Activated B cell treated with CpG ODN at 0.5 μM for 24 hours (primary cell): ENCODE measurements at regions of chr2 and their contacts with region 1.

Region 1: GRCh38 chr2:85327822-85328617 is at the start of gene TGOLN2:
- DNase-seq: peak; percentile 91
- ATAC-seq: peak; percentile 90
- H3K4me3 Mint-ChIP-seq: peak within 1 kb of the TSS; percentile 99
- H3K27ac Mint-ChIP-seq: peak within 1 kb of the TSS; percentile 100
- H3K4me1 Mint-ChIP-seq: peaks cover 61% of the 10 kb centered on the region
- H3K27me3 Mint-ChIP-seq: no peaks in the 10 kb centered on the region
- CTCF ChIP-seq: no peak
- total RNA-seq, gene TGOLN2: 103 and 119 TPM in 2 replicates

Region 2: GRCh38 chr2:84946204-84947009 is 381.6 kb before region 1 on chr2:
- CTCF ChIA-PET with region 1: no interaction called
- POLR2A ChIA-PET with region 1: interaction called, 16 read pairs
- intact Hi-C with region 1: no loop called
- DNase-seq: peak; percentile 44
- ATAC-seq: peak; percentile 77
- H3K4me3 Mint-ChIP-seq: peak overlapping the region; percentile 72
- H3K27ac Mint-ChIP-seq: peak overlapping the region; percentile 97
- H3K4me1 Mint-ChIP-seq: peaks cover 54% of the 10 kb centered on the region
- H3K27me3 Mint-ChIP-seq: no peaks in the 10 kb centered on the region
- CTCF ChIP-seq: no peak

Region 3: DNA sequence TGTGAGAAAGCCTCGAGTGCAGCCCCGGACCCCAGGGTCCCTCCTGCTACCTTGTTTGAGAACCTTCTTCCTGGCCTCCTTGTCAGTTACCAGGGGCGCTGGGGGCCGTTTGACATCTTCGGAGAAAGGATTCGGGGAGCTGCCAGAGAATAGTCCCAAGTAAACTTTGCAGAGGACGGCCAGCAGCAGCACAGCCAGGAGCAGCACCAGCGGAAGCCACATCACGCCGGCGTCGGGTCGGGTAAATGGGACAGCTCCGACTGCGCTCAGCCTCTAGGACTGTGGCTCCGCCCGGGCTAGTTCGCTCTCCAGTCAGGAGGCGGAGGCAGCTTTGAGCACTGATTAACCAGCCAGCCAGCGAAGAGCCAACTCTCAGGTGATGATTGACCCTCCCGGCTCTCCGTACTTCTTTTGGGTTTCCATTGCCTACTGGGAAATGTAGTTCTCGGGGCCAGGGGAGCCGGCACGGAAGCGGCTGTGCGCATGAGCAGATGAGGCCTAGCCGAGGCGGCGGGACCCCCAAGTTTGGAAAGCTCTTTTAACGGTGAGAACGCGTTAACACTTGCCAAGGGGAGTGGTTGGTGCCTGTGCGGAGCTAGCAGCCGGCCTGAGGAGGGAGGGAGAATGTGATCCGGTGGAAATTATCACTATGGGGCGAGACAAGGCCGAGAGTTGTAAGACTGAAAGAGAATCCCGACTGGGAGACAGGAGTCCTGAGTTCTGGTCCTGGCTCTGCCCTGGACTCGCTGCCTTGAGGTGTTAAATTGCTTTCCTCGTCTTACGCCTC is 26.5 kb after region 1 on chr2 and contains the starts of genes ELMOD3 and RETSAT:
- CTCF ChIA-PET with region 1: no interaction called
- POLR2A ChIA-PET with region 1: interaction called, 93 read pairs
- intact Hi-C with region 1: loop called (anchors 1 kb)
- DNase-seq: peak; percentile 84
- ATAC-seq: peak; percentile 99
- H3K4me3 Mint-ChIP-seq: peak within 1 kb of the TSS; percentile 100
- H3K27ac Mint-ChIP-seq: peak within 1 kb of the TSS; percentile 99
- H3K4me1 Mint-ChIP-seq: peaks cover 48% of the 10 kb centered on the region
- H3K27me3 Mint-ChIP-seq: no peaks in the 10 kb centered on the region
- CTCF ChIP-seq: no peak
- total RNA-seq, gene ELMOD3: 19.2 and 25.4 TPM in 2 replicates
- total RNA-seq, gene RETSAT: 16.9 and 17.1 TPM in 2 replicates

Region 4: DNA sequence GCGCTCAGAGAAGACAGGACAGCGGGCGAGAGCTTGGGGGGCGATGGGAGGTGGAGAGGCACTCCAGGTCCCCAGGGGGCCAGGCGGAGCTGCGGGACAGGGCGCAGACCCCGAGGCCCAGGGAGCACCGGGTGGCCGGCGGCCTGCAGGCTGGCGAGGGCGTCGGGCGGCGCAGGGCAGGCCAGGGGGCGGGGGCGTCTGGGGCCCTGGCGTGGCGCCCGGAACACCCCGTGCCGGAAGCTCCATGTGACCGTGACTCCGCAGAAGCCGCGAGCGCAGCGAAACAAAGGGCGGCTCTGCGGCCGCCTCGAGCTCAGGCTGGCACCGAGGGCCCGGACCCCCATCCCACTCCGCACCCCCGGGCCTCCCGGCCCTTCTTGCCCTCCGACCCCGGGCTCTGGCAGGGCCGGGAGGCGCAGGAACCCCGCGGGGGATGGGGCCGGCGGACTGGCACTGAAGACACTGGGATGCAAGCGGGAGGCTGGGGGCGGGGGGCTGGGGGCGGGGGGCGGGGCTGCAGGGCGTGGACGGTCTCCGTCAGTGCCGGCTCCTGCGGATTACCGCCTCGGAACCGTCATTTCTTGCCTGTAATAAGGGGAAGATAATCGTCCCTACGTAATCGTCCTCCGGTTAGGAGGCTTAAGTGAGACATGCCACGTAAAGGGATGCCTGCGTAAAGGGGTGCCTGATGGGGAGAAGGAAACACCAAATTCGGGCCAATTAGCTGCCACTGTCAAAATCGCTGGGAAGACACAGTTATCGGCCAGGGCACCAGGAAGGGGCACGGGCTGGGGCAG is 109.7 kb after region 1 on chr2:
- CTCF ChIA-PET with region 1: no interaction called
- POLR2A ChIA-PET with region 1: interaction called, 25 read pairs
- intact Hi-C with region 1: no loop called
- DNase-seq: peak; percentile 80
- ATAC-seq: peak; percentile 86
- H3K4me3 Mint-ChIP-seq: peak overlapping the region; percentile 87
- H3K27ac Mint-ChIP-seq: peak overlapping the region; percentile 95
- H3K4me1 Mint-ChIP-seq: peaks cover 33% of the 10 kb centered on the region
- H3K27me3 Mint-ChIP-seq: no peaks in the 10 kb centered on the region
- CTCF ChIP-seq: no peak

Region 5: GRCh38 chr2:85602476-85603234 is 274.6 kb after region 1 on chr2 and contains the start of gene TMEM150A:
- CTCF ChIA-PET with region 1: no interaction called
- POLR2A ChIA-PET with region 1: interaction called, 10 read pairs
- intact Hi-C with region 1: no loop called
- DNase-seq: peak; percentile 91
- ATAC-seq: peak; percentile 97
- H3K4me3 Mint-ChIP-seq: peak within 1 kb of the TSS; percentile 90
- H3K27ac Mint-ChIP-seq: peak within 1 kb of the TSS; percentile 84
- H3K4me1 Mint-ChIP-seq: peaks cover 31% of the 10 kb centered on the region
- H3K27me3 Mint-ChIP-seq: no peaks in the 10 kb centered on the region
- CTCF ChIP-seq: no peak
- total RNA-seq, gene TMEM150A: 13.2 and 15.0 TPM in 2 replicates

Region 6: DNA sequence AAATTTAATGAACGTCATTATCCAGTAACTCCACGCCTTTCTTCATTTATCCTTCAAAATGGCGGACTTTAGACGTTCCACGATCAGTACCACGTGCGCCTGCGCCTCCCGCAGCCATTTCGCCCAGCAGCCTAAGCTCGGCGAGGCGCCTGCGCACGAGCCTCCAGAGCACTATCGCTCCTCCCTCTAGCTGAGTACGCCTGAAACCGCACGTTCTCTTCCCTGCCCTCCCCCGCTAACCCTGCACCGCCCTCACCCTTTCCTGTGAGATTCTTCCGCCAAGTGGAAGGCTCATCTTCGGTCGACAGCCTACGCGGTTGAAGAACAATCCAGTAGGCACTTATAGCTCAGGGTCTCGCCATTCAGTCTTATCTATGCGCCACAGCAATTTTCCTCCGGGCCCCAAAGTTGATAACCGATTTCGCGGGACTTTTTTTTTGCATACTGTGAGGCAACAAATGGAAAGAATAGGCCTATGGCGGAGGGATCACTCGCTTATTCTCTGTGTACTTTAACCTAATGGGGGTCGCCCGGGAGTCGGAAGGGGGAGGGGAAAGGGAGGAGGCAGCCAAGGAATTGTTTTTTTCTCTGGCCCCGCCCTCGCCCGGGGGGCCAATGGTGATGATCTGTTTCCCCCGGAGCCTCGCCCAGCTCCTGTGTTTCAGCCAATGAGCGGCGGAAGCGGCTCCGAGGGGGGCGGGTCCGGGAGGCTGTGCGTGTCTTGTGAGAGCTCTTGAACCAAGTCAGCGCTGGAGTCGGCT is 1112.8 kb after region 1 on chr2 and contains the start of gene KDM3A:
- CTCF ChIA-PET with region 1: no interaction called
- POLR2A ChIA-PET with region 1: interaction called, 15 read pairs
- intact Hi-C with region 1: no loop called
- DNase-seq: peak; percentile 97
- ATAC-seq: peak; percentile 81
- H3K4me3 Mint-ChIP-seq: peak within 1 kb of the TSS; percentile 96
- H3K27ac Mint-ChIP-seq: peak within 1 kb of the TSS; percentile 100
- H3K4me1 Mint-ChIP-seq: peaks cover 45% of the 10 kb centered on the region
- H3K27me3 Mint-ChIP-seq: no peaks in the 10 kb centered on the region
- CTCF ChIP-seq: no peak
- total RNA-seq, gene KDM3A: 46.0 and 47.6 TPM in 2 replicates